ENCODE measurements at regions of chr6 and their contacts with region 1.

Region 1: GRCh38 chr6:32203426-32204247 is 11.2 kb upstream of the GPSM3 start:
- DNase-seq: no peak
- H3K4me3 ChIP-seq: no peak overlapping the region
- H3K27ac ChIP-seq: peak overlapping the region in 1 of 5 donors; percentile 22
- H3K4me1 ChIP-seq: no peaks in the 10 kb centered on the region
- H3K27me3 ChIP-seq: no peaks in the 10 kb centered on the region
- CTCF ChIP-seq: no peak
- POLR2A ChIP-seq: no peak

Region 2: GRCh38 chr6:31175971-31176370 is 1027.7 kb before region 1 on chr6:
- intact Hi-C with region 1: loop called in 1 of 2 experiments (anchors 10 kb)
- DNase-seq: no peak
- H3K4me3 ChIP-seq: no peak overlapping the region
- H3K27ac ChIP-seq: no peak overlapping the region
- H3K4me1 ChIP-seq: no peaks in the 10 kb centered on the region
- H3K27me3 ChIP-seq: no peaks in the 10 kb centered on the region
- CTCF ChIP-seq: no peak
- POLR2A ChIP-seq: no peak

Region 3: DNA sequence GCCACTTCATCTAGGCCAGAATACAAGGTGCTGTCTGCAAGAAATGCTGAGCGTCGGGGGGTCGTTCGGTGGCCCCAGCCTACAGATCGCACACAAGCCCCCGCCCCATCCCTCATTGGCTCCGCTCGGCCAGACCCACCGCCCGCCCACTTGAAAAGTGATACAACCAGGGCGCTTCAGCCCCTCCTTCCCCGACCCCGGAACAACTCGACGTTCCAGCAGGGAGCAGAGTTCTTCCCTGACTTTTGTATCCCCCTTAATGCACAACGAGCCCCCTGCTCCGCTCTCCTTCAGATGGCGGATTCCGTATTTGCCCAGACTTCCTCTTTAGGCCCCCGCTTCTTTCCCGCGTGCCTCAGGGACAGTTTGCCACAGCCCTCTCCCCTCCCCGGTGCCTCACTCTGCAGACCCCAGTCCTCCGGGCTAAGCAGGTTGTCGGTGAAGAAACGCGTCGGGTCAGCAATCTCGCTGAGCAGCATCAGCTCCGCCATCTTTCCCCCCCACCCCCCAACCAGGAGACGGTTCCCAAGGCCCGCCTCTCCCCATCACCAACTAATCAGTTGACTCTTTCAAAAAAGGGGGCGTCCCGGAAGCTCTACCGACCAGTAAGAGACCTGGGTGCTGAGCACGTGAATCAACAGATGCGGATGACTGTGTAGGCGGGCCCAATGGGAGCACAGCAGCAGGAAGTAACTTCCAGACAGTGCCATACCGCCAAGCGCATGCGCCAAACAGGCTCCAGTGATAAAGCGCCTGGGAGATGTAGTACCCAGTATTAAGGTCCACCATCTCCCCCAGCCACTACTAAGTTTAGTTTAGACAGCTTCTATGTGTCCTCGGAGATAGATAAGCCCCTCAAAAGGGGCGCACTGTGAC is 75.7 kb before region 1 on chr6 and contains the start of gene ATF6B:
- intact Hi-C with region 1: no loop called
- DNase-seq: peak; percentile 97 to 100 (median 100)
- H3K4me3 ChIP-seq: peak within 1 kb of the TSS; percentile 54 to 100 (median 92)
- H3K27ac ChIP-seq: peak within 1 kb of the TSS; percentile 74 to 94 (median 88)
- H3K4me1 ChIP-seq: peaks cover 20 to 29% of the 10 kb centered on the region in 2 donors
- H3K27me3 ChIP-seq: no peaks in the 10 kb centered on the region
- CTCF ChIP-seq: no peak
- POLR2A ChIP-seq: peak; percentile 28 to 65
- total RNA-seq, gene ATF6B: 17.7 to 109 (median 35.7) TPM

Measured in adrenal gland (tissue), 19 donors.